Ascending aorta (tissue), 2 donors: ENCODE measurements at regions of chr5 and their contacts with region 1.

Region 1: GRCh38 chr5:136356747-136357469 is 8.4 kb downstream of the TRPC7 start:
- DNase-seq: no peak
- H3K4me3 ChIP-seq: no peak overlapping the region
- H3K27ac ChIP-seq: no peak overlapping the region
- H3K4me1 ChIP-seq: no peaks in the 10 kb centered on the region
- H3K27me3 ChIP-seq: no peaks in the 10 kb centered on the region
- CTCF ChIP-seq: no peak

Region 2: GRCh38 chr5:137563646-137564397 is 1206.9 kb after region 1 on chr5:
- intact Hi-C with region 1: loop called (anchors 10 kb)
- DNase-seq: no peak
- H3K4me3 ChIP-seq: no peak overlapping the region
- H3K27ac ChIP-seq: no peak overlapping the region
- H3K4me1 ChIP-seq: peaks cover 0 to 3% of the 10 kb centered on the region in 2 donors
- H3K27me3 ChIP-seq: no peaks in the 10 kb centered on the region
- CTCF ChIP-seq: no peak